ENCODE measurements at regions of chr20 and their contacts with region 1.

Region 1: DNA sequence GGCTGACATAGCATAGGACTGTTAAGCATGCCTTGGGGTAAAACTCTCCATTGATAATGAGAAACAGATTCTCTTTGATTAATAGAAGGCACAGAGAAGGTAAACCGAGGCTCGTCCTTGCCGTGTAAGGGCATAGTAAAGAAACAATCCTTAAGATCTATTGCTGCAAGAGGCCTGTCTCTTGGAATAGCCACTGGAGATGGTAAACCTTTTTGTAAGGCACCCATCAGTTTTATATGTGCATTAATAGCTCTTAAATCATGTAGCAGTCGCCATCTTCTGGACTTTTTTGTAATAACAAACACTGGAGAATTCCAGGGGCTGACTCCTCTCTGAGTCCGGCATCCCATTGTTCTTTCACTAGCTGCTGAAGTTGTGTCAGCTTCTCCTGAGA is 8.4 kb upstream of the ABHD12 start:
- DNase-seq: peak; percentile 37
- ATAC-seq: peak; percentile 45
- H3K4me3 Mint-ChIP-seq: no peak overlapping the region
- H3K27ac Mint-ChIP-seq: no peak overlapping the region
- H3K4me1 Mint-ChIP-seq: no peaks in the 10 kb centered on the region
- H3K27me3 Mint-ChIP-seq: no peaks in the 10 kb centered on the region
- CTCF ChIP-seq: peak; percentile 73

Region 2: GRCh38 chr20:24992487-24993205 is 406.4 kb before region 1 on chr20 and contains the start of gene APMAP:
- CTCF ChIA-PET with region 1: interaction called, 11 read pairs
- POLR2A ChIA-PET with region 1: no interaction called
- intact Hi-C with region 1: loop called (anchors 10 kb)
- DNase-seq: peak; percentile 98
- ATAC-seq: peak; percentile 95
- H3K4me3 Mint-ChIP-seq: peak within 1 kb of the TSS; percentile 97
- H3K27ac Mint-ChIP-seq: peak within 1 kb of the TSS; percentile 95
- H3K4me1 Mint-ChIP-seq: peaks cover 54% of the 10 kb centered on the region
- H3K27me3 Mint-ChIP-seq: no peaks in the 10 kb centered on the region
- CTCF ChIP-seq: no peak
- total RNA-seq, gene APMAP: 36.7 to 40.0 TPM

Region 3: DNA sequence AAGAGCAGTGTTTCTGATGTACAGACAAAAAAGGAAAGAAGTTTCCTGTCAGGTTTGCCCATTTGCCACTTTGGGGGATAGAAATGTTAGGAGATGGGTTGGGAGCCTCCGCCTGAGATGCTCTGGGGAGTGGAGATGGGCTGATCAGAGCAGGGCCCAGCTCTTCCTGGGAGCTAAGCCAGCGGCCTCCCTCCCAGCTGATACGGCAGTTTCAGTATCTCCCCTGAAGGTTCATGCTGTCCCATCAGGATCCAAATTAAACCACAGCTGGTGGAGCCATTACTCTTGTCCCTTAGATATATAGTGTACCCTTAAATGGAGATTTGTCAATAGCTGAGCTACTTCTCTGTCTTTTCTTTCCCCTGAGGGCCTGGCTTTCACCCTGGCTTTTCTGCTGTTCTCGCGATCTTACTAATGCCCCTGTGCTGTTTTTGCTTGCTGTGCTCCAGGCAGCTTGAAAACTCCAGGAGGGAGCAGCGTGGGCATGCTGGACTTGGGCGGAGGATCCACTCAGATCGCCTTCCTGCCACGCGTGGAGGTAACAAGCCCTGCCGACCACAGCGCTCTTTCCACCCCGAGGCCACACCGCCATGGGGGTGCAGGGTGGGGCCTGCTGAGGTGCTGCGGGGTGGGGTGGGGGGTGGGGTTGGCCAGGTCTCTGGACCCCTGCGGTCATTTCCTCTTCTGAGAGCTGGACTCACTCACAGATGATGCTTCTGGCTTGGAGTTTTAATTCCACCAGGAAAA is 182.7 kb before region 1 on chr20:
- CTCF ChIA-PET with region 1: no interaction called
- POLR2A ChIA-PET with region 1: no interaction called
- intact Hi-C with region 1: no loop called
- DNase-seq: no peak
- ATAC-seq: no peak
- H3K4me3 Mint-ChIP-seq: no peak overlapping the region
- H3K27ac Mint-ChIP-seq: no peak overlapping the region
- H3K4me1 Mint-ChIP-seq: no peaks in the 10 kb centered on the region
- H3K27me3 Mint-ChIP-seq: no peaks in the 10 kb centered on the region
- CTCF ChIP-seq: no peak

Region 4: GRCh38 chr20:25247956-25248785 is 150.9 kb before region 1 on chr20 and contains the start of gene PYGB:
- CTCF ChIA-PET with region 1: interaction called, 11 read pairs
- POLR2A ChIA-PET with region 1: no interaction called
- intact Hi-C with region 1: no loop called
- DNase-seq: peak; percentile 76
- ATAC-seq: peak; percentile 88
- H3K4me3 Mint-ChIP-seq: peak within 1 kb of the TSS; percentile 89
- H3K27ac Mint-ChIP-seq: peak within 1 kb of the TSS; percentile 91
- H3K4me1 Mint-ChIP-seq: peaks cover 53% of the 10 kb centered on the region
- H3K27me3 Mint-ChIP-seq: peaks cover 7% of the 10 kb centered on the region
- CTCF ChIP-seq: no peak
- total RNA-seq, gene PYGB: 26.1 to 26.5 TPM

Region 5: DNA sequence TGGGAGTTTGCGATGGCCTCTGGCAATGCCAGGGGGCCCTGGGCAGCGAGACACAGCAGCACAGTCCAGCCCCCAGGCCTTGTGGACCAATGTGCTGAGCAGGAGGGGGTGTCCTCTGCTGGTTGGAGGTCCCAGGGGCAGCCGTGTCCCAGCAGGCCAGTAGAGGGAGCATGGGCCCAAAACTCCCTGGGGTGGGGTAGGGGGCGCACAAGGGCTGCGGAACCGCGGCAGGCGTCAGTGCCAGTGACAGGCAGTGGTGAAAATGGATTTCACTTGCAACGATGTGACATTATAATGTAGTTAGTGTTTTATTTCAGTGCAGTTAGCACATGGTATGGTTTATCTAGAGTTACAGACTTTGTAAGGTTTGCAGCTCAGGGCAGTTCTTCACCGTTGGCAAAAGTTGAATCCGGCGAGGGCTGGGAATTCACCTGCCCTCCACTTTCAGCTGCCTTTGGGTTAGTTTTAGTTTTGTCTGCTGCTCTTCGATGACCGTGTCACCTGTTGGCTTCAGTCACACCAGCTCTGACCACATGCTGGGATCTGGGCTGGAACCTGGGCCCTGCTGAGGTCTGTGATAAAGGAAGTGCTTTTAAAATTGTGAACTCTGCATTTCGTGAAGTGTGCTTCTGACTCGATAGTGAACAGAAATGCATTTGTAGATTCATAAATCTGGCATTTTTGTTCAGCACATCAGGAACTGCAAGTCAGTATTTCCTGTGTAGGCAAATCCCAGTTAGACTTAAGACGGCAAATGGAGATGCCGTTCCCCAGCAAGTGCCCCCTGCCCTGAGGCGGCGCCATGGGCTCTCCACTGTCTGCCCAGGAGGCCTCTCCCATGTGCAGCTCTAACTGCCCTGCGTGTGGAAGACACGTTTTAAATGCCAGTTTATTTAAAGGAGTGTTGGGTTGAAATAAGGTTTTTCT is 104.3 kb before region 1 on chr20:
- CTCF ChIA-PET with region 1: interaction called, 58 read pairs
- POLR2A ChIA-PET with region 1: no interaction called
- intact Hi-C with region 1: no loop called
- DNase-seq: peak; percentile 70
- ATAC-seq: peak; percentile 90
- H3K4me3 Mint-ChIP-seq: no peak overlapping the region
- H3K27ac Mint-ChIP-seq: peak overlapping the region; percentile 62
- H3K4me1 Mint-ChIP-seq: peaks cover 6% of the 10 kb centered on the region
- H3K27me3 Mint-ChIP-seq: no peaks in the 10 kb centered on the region
- CTCF ChIP-seq: peak; percentile 73

Region 6: DNA sequence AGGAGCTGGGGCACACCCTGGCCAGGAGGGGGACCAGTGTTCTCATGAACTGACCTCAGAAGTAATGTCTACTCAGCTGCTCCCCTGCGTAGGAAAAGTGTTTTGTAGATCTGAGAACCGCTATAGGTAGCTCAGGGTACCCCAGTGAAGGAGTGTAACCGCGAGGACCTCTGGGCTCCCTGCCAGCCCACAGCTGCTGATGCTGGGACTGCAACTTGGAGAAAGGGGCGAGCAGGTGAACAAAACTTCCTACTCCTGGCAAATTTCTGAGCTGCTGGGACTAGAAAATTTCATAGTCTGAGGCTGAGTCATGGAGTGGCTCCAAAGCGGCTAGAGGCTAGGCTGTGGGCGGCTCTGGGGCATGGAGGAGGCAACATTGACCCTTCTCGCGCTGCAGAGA is 99.2 kb before region 1 on chr20:
- CTCF ChIA-PET with region 1: interaction called, 58 read pairs
- POLR2A ChIA-PET with region 1: interaction called, 3 read pairs
- intact Hi-C with region 1: loop called (anchors 2 kb)
- DNase-seq: no peak
- ATAC-seq: no peak
- H3K4me3 Mint-ChIP-seq: no peak overlapping the region
- H3K27ac Mint-ChIP-seq: peak overlapping the region; percentile 43
- H3K4me1 Mint-ChIP-seq: peaks cover 3% of the 10 kb centered on the region
- H3K27me3 Mint-ChIP-seq: no peaks in the 10 kb centered on the region
- CTCF ChIP-seq: no peak

Region 7: GRCh38 chr20:25310268-25310920 is 88.6 kb before region 1 on chr20:
- CTCF ChIA-PET with region 1: interaction called, 27 read pairs
- POLR2A ChIA-PET with region 1: interaction called, 3 read pairs
- intact Hi-C with region 1: no loop called
- DNase-seq: peak; percentile 77
- ATAC-seq: peak; percentile 97
- H3K4me3 Mint-ChIP-seq: peak overlapping the region; percentile 54
- H3K27ac Mint-ChIP-seq: peak overlapping the region; percentile 85
- H3K4me1 Mint-ChIP-seq: peaks cover 31% of the 10 kb centered on the region
- H3K27me3 Mint-ChIP-seq: no peaks in the 10 kb centered on the region
- CTCF ChIP-seq: peak; percentile 54

Region 8: DNA sequence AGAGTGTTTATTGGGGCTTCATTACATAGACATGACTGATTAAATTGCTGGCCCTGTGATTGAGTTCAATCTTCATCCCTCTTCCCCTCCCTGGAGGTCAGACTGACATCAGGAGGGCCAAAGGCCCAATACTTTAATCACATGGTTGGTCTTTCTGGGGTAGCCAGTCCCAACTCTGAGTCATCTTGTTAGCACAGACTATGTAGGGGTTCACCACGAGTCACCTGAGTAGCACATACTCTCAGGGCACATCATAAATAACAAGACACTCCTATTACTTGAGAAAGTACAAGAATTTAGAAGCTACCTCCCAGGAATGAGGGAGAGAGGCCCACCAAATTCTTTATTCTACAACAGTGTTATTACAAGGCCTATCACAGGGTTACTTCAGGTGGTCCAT is 19.7 kb after region 1 on chr20:
- CTCF ChIA-PET with region 1: no interaction called
- POLR2A ChIA-PET with region 1: no interaction called
- intact Hi-C with region 1: no loop called
- DNase-seq: no peak
- ATAC-seq: no peak
- H3K4me3 Mint-ChIP-seq: no peak overlapping the region
- H3K27ac Mint-ChIP-seq: no peak overlapping the region
- H3K4me1 Mint-ChIP-seq: no peaks in the 10 kb centered on the region
- H3K27me3 Mint-ChIP-seq: no peaks in the 10 kb centered on the region
- CTCF ChIP-seq: no peak